Psoas muscle (tissue), 8 donors: ENCODE measurements at regions of chr21 and their contacts with region 1.

Region 1: GRCh38 chr21:33127154-33127893 is 57.4 kb downstream of the OLIG1 start:
- DNase-seq: peak; percentile 56 to 80
- ATAC-seq: peak; percentile 76 to 92 (median 90)
- H3K4me3 ChIP-seq: peak overlapping the region; percentile 39
- H3K27ac ChIP-seq: no peak overlapping the region
- H3K4me1 ChIP-seq: no peaks in the 10 kb centered on the region
- H3K27me3 ChIP-seq: peaks cover 0 to 21% (median 8%) of the 10 kb centered on the region in 3 donors
- CTCF ChIP-seq: peak; percentile 75

Region 2: DNA sequence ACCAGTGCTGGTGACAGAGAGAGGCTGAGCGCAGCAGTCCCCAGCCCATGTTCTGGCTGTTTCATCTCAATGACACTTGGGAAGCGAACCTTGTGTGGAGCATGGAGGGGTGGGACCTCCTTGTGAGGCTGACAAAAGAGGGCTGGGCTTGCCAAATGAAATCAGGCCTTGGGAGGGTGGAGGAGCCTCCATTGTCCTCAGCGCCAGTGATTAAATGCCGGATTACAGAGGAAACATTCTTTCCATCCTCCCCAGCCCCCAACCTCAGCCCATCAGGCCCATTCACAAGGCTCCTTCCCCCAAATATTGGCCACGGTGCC is 292.4 kb before region 1 on chr21:
- intact Hi-C with region 1: loop called in 1 of 2 experiments (anchors 5 kb)
- DNase-seq: no peak
- ATAC-seq: no peak
- H3K4me3 ChIP-seq: no peak overlapping the region
- H3K27ac ChIP-seq: no peak overlapping the region
- H3K4me1 ChIP-seq: no peaks in the 10 kb centered on the region
- H3K27me3 ChIP-seq: peaks cover 0 to 2% (median 0%) of the 10 kb centered on the region in 3 donors
- CTCF ChIP-seq: no peak

Region 3: DNA sequence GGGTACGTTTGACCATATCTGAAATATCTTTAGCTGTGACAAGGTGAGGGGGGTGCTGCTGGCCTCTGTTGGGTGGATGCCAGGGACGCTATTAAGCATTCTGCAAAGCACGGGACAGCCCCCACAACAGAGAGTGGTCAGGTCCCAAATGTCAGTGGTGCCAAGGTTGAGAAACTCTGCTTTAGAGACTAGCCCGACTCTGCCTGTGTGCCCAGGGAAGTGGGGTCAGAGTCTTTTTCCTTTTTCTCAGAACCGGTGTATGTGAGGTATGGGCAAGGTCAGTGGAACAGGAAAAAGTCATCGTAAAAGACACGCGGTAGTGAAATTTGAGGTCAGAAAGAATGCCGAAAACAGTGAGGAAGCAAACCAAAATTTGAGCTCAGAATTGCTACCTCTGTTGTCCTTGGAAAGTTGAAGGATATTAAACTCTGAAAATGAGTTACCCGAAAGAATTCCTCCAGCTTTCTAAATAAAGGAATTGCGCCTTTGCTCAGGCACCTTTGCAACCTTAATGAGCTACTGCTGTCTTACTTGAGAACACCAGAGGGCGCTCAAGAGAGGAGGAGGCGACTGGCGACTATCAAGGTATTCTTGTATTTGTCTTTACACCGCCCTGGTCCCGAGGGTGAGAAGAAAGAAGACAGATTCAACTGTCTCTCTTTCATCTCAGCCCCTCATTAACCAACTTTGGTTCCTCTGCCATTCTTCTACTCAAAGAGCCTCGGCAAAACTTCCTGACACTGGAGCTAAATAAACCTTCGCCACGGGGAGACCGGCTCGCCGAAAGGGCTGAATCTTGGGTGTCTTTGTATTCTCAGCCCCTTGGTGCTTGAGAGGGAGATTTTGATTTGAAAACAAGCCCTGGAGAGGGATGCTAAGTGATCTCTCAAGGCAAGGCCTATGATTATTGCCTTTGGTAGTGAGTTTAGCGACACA is 187.0 kb before region 1 on chr21:
- intact Hi-C with region 1: loop called (anchors 5 kb)
- DNase-seq: no peak
- ATAC-seq: peak in 3 of 4 donors; percentile 55 to 72 (median 57)
- H3K4me3 ChIP-seq: no peak overlapping the region
- H3K27ac ChIP-seq: no peak overlapping the region
- H3K4me1 ChIP-seq: no peaks in the 10 kb centered on the region
- H3K27me3 ChIP-seq: no peaks in the 10 kb centered on the region
- CTCF ChIP-seq: peak; percentile 82

Region 4: DNA sequence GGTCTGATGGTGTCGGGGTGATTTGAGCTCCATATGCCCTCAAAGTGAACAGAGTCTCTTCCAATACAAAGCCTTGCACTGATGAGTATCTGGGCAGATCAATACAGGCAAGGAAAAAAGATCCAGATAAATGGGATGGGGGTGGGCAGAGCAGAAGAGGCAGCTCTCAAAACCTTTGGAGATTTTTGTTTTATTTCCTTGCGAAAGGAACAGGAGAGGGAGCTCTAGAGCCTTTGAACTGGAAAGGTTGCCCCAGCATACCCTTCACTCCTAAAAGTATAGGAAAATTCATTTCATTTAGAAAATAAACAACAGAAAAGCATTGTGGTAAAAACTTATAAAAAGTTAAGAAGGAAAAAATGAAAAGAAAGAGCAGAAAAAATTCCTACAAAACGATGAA is 133.0 kb before region 1 on chr21:
- intact Hi-C with region 1: loop called (anchors 1 to 5 kb)
- DNase-seq: no peak
- ATAC-seq: no peak
- H3K4me3 ChIP-seq: no peak overlapping the region
- H3K27ac ChIP-seq: no peak overlapping the region
- H3K4me1 ChIP-seq: no peaks in the 10 kb centered on the region
- H3K27me3 ChIP-seq: peaks cover 2 to 25% (median 6%) of the 10 kb centered on the region in 3 donors
- CTCF ChIP-seq: peak; percentile 45